HCT116 (cell line): ENCODE measurements at regions of chr6 and their contacts with region 1.

Region 1: GRCh38 chr6:135162678-135163439 is 18.2 kb upstream of the MYB start:
- DNase-seq: peak; percentile 68
- ATAC-seq: peak; percentile 99
- H3K4me3 ChIP-seq: no peak overlapping the region
- H3K27ac ChIP-seq: no peak overlapping the region
- H3K4me1 ChIP-seq: peaks cover 0 to 6% of the 10 kb centered on the region in 2 experiments; a peak in 2 of 4 replicates
- H3K27me3 ChIP-seq: no peaks in the 10 kb centered on the region
- CTCF ChIP-seq: peak; percentile 22 to 90 (median 79); a peak in 5 of 6 replicates
- POLR2A ChIP-seq: no peak
- RAD21 ChIP-seq: no peak

Region 2: DNA sequence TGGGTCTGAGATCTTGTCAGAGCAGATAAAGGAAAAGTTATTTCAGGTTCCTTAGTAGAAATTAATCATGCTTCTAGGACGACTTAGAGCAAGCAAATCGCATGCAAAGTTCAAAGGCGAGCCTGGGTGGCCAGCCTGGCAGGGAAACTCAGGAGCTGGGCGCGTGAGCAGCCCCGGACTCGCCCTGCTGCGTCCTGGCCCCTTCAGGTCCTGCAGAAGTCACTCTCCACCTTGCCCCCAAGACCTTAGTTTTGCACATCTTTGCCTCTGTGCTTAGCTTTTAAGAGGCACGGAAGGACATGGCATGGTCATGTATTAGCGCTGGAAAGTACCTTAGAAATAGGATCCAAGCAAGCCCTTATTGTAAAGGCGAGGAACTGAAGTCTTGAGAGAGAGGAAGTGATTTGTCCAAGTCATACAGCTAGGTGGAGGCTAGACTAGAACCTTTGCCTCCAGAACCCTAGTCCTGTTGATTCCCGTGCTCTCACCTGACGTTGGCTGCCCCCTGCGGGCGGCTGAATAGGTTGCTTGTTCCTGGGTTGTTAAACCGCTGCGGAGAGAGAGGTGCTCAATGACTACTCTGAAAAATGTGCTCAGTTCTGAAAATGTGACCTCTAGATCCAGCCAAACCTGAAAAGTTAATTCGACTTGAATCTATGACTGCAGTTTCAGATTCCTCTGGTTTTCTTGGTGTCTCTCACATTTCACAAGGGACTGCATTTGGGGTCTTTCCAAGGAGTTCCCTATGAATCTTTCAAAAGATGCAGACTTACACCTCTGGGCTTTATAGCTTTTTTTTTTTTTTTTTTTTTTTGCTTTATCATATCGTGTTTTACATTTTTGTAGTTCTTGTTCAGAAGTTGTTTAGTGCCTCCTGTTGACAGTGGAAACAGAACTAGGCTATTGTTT is 20.9 kb after region 1 on chr6:
- CTCF ChIA-PET with region 1: interaction called, 11 read pairs
- POLR2A ChIA-PET with region 1: no interaction called
- RAD21 ChIA-PET with region 1: no interaction called
- intact Hi-C with region 1: no loop called
- DNase-seq: peak; percentile 83
- ATAC-seq: peak; percentile 71
- H3K4me3 ChIP-seq: peak overlapping the region; percentile 55 to 64
- H3K27ac ChIP-seq: no peak overlapping the region
- H3K4me1 ChIP-seq: peaks cover 2 to 39% of the 10 kb centered on the region in 2 experiments; a peak in 3 of 4 replicates
- H3K27me3 ChIP-seq: no peaks in the 10 kb centered on the region
- CTCF ChIP-seq: peak; percentile 72 to 84 (median 78)
- POLR2A ChIP-seq: no peak
- RAD21 ChIP-seq: peak; percentile 81